ENCODE measurements at regions of chr21 and their contacts with region 1.

Region 1: DNA sequence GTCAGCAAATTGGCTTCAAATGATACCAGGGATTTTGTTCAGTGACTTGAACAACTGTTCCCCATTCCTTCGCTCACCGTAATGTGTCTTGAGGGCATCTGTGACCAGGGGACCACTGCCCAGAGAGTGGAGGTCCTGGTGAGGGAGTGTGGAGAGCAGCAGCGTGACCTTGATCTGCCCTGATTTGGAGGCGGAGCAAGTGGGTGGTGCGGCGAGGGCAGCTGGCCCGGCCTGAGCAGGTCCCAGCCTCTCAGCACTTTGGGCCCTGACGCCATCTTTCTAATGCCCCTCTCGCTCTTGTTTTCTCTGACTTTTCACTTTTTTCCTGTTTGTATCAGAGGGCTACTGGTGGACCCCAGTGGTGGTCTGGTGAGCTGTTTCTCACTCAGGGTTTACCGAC is 31.1 kb downstream of the DIP2A start:
- DNase-seq: no peak
- ATAC-seq: no peak
- H3K4me3 Mint-ChIP-seq: no peak overlapping the region
- H3K27ac Mint-ChIP-seq: no peak overlapping the region
- H3K4me1 Mint-ChIP-seq: peaks cover 4% of the 10 kb centered on the region
- H3K27me3 Mint-ChIP-seq: no peaks in the 10 kb centered on the region

Region 2: GRCh38 chr21:46191257-46191685 is 298.5 kb before region 1 on chr21:
- CTCF ChIA-PET with region 1: no interaction called
- POLR2A ChIA-PET with region 1: no interaction called
- DNase-seq: no peak
- ATAC-seq: no peak
- H3K4me3 Mint-ChIP-seq: no peak overlapping the region
- H3K27ac Mint-ChIP-seq: no peak overlapping the region
- H3K4me1 Mint-ChIP-seq: no peaks in the 10 kb centered on the region
- H3K27me3 Mint-ChIP-seq: no peaks in the 10 kb centered on the region

Region 3: DNA sequence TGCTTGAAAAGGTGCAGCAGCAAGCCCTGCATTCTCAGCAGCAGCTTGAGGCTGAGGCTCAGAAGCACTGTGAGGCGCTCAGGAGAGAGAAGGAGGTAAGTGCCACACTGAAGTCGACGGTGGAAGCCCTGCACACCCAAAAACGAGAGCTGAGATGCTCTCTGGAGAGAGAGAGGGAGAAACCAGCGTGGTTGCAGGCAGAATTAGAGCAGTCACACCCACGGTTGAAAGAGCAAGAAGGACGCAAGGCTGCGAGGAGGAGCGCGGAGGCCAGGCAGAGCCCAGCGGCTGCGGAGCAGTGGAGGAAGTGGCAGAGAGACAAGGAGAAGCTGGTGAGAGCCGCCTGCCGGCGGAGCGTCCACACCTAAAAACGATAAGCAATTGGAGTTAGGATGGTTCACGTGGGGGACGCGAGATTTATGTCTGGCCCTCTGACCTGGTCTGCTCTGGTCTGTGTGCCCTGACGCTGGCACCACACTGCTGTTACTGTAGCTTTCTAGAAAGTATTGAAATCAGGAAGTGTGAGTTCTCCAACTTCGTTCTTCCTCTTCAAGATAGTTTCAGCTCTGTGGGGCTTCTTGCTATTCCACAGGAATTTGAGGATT is 57.8 kb before region 1 on chr21:
- CTCF ChIA-PET with region 1: no interaction called
- POLR2A ChIA-PET with region 1: no interaction called
- DNase-seq: peak; percentile 32
- ATAC-seq: peak; percentile 22
- H3K4me3 Mint-ChIP-seq: no peak overlapping the region
- H3K27ac Mint-ChIP-seq: peak overlapping the region; percentile 17
- H3K4me1 Mint-ChIP-seq: peaks cover 10% of the 10 kb centered on the region
- H3K27me3 Mint-ChIP-seq: no peaks in the 10 kb centered on the region

Region 4: DNA sequence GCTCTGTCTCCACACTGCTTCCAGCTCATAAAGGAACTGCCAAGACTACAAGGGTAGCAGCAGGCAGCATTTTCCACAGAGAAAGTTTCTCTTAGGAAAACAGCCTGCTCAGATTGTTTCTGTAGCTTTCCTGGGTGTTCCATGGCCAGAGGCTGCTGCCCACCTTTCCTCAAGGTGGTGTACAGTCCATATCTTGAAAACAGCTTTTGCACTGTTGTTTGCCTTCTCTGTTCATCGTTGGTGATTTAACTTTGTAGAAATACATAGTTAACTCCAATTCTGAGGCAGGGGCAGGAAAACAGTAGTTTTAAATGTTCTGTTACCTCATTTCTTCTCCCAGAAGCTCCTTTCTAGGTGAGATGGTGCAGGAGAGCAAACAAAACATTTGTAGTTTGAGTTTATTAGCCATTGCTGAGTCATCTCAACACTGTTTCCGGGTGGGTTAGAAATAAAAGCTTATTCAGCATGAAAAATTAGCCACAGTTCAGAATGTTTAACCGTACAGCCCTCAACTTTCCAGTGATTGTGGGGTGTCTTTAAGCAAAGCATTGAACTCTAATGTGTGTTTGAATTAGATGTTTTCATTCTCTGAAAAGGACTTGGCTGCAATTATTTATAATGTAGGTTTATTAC is 10.5 kb after region 1 on chr21:
- CTCF ChIA-PET with region 1: interaction called, 12 read pairs
- POLR2A ChIA-PET with region 1: no interaction called
- DNase-seq: no peak
- ATAC-seq: peak; percentile 42
- H3K4me3 Mint-ChIP-seq: no peak overlapping the region
- H3K27ac Mint-ChIP-seq: peak overlapping the region; percentile 69
- H3K4me1 Mint-ChIP-seq: peaks cover 24% of the 10 kb centered on the region
- H3K27me3 Mint-ChIP-seq: no peaks in the 10 kb centered on the region